ENCODE measurements at regions of chr18 and their contacts with region 1.

Region 1: DNA sequence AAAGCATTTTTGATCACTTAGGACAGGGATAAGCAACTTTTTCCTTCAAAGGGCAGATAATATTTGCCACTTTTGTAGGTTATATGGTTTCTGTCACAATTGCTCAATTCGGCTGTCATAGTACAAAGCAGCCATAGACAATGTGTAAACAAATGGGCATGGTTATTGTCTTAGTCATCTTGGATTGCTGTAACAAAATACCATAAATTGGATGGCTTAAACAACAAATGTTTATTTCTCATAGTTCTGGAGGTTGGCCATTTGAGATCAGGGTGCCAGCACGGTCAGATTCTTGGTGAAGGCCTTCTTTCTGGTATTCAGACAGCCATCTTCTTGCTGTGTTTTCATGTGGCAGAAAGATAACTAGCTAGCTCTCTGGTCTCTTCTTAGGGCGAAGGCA is 91.2 kb downstream of the TAF4B start:
- DNase-seq: no peak
- H3K4me3 ChIP-seq: no peak overlapping the region
- H3K27ac ChIP-seq: no peak overlapping the region
- H3K4me1 ChIP-seq: no peaks in the 10 kb centered on the region
- H3K27me3 ChIP-seq: no peaks in the 10 kb centered on the region
- CTCF ChIP-seq: no peak
- POLR2A ChIP-seq: no peak

Region 2: DNA sequence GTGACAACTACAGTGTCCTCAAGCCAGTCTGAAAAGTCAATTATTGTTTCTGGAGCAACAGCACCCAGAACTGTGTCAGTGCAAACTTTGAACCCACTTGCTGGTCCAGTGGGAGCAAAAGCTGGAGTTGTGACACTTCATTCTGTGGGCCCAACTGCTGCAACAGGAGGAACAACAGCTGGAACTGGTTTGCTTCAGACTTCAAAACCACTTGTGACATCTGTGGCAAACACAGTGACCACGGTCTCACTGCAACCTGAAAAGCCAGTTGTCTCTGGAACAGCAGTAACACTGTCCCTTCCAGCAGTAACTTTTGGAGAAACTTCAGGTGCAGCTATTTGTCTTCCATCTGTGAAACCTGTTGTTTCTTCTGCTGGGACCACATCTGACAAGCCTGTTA is 31.4 kb before region 1 on chr18:
- CTCF ChIA-PET with region 1: no interaction called
- POLR2A ChIA-PET with region 1: no interaction called
- dilution Hi-C with region 1: no loop called
- intact Hi-C with region 1: no loop called
- DNase-seq: no peak
- H3K4me3 ChIP-seq: no peak overlapping the region
- H3K27ac ChIP-seq: no peak overlapping the region
- H3K4me1 ChIP-seq: no peaks in the 10 kb centered on the region
- H3K27me3 ChIP-seq: no peaks in the 10 kb centered on the region
- CTCF ChIP-seq: no peak
- POLR2A ChIP-seq: no peak

Region 3: DNA sequence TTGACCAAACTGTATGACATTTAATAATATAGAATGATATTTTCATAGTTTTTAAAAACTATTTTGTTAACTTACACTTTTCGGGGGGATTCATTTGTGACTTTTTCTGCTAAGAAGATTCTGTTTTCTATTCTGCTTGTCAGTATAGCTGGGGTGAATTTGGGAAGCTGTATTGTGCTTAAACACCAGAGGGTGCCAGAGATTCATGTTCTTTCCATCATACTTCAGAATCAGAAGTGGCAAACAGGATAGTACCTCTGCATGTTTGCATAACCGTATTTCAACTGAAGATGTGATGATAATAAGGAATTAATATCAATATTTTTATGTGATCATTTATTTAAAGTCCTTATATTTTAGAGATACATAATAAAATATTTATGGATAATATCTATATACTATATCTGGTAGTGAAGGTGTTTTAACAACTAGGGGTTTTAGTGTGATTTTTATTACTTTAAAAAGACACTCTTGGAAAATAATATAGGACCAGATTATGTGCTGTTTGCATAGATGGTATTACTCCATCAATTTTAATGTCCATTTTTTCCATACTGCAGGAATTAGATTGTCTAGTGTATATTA is 10.1 kb before region 1 on chr18:
- CTCF ChIA-PET with region 1: interaction called, 18 read pairs
- POLR2A ChIA-PET with region 1: no interaction called
- dilution Hi-C with region 1: no loop called
- intact Hi-C with region 1: no loop called
- DNase-seq: peak; percentile 70
- H3K4me3 ChIP-seq: no peak overlapping the region
- H3K27ac ChIP-seq: no peak overlapping the region
- H3K4me1 ChIP-seq: peaks cover 3% of the 10 kb centered on the region
- H3K27me3 ChIP-seq: no peaks in the 10 kb centered on the region
- CTCF ChIP-seq: peak; percentile 43 to 57
- POLR2A ChIP-seq: no peak

Measured in endothelial cell of umbilical vein (primary cell).